IMR-90 (cell line): ENCODE measurements at regions of chr19 and their contacts with region 1.

Region 1: DNA sequence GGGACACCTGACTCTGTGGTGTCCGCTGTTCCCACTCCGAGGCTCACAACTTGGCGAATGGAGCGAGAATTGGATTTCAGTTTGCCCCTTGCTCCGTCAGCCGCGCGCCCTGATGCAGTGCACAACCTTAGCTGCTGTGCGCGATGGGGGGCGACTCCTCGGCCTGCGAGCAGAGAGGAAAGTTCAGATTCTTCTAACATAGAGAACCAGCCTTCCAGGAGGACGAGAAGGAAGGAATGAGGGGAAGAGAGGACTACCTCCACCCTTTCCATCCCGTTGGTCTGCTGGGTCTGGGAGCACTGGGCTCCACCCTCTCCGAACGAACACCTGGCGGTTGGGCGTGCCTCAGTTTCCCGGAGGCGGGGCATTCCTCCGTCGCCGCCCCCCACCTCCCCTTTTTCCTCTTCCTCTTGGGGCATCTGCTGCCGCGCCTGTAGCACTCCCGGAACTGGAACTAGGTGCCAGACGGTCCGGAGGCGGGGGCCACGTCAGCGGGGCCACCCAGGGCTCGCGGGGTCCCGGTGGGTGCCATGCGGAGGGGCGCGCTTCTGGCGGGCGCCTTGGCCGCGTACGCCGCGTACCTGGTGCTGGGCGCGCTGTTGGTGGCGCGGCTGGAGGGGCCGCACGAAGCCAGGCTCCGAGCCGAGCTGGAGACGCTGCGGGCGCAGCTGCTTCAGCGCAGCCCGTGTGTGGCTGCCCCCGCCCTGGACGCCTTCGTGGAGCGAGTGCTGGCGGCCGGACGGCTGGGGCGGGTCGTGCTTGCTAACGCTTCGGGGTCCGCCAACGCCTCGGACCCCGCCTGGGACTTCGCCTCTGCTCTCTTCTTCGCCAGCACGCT is at the start of gene KCNK6:
- DNase-seq: no peak
- ATAC-seq: peak; percentile 19
- H3K4me3 ChIP-seq: peak within 1 kb of the TSS; percentile 56
- H3K27ac ChIP-seq: no peak within 1 kb of the TSS; the same call in 1 of the 2 replicates
- H3K4me1 ChIP-seq: peaks cover 6% of the 10 kb centered on the region
- H3K27me3 ChIP-seq: no peaks in the 10 kb centered on the region; the same call in 1 of the 2 replicates
- CTCF ChIP-seq: no peak
- POLR2A ChIP-seq: peak; percentile 23; the same call in 1 of the 2 replicates
- RAD21 ChIP-seq: no peak
- total RNA-seq, gene KCNK6: 2.7 and 2.8 TPM in 2 replicates

Region 2: DNA sequence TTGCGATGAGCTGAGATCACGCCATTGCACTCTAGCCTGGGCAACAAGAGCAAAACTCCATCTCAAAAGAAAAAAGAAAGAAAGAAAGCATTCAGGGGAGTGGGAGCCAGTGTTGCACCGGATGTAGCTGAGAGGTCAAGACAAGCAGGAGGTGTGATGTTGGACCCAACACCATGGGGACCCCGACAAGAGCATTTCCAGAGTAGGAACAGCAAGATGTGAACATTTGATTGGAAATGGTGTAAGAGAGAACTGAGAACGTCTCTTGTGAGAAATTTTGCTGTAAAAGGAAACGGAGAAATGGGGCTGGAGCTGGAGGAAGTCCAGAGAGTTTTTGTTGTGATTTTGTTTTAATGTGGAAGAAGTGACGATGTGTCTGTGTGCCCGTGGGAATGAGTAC is 79.8 kb before region 1 on chr19:
- CTCF ChIA-PET with region 1: interaction called, 5 read pairs
- POLR2A ChIA-PET with region 1: interaction called, 11 read pairs
- dilution Hi-C with region 1: no loop called
- in situ Hi-C with region 1: no loop called
- intact Hi-C with region 1: no loop called
- DNase-seq: no peak
- ATAC-seq: no peak
- H3K4me3 ChIP-seq: no peak overlapping the region
- H3K27ac ChIP-seq: no peak overlapping the region
- H3K4me1 ChIP-seq: 0 out of 2 replicates have a peak, but pooled peaks cover under 1% of the 10 kb centered on the region
- H3K27me3 ChIP-seq: peaks cover 2% of the 10 kb centered on the region; the same call in 1 of the 2 replicates
- CTCF ChIP-seq: no peak
- POLR2A ChIP-seq: no peak
- RAD21 ChIP-seq: no peak

Region 3: DNA sequence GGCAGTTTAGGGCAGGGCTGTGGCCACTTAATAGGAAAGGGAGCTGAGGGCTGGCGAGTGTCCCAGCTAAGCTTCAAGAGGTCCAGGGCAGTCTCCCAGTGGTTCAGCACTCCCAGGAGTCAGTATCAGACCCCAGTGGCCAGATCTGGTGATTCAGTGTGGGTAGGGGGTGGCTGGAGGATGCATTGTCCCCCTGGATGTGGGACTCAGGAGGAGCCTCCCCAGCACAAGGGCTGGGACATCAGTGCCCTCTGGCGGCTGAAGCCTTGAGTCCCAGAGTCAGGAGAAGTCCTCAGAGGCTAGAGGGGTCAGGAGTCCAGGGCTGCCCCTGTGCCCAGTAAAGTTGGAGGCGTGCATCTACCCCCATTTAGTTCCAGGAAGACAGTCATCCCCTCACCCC is 65.0 kb after region 1 on chr19:
- CTCF ChIA-PET with region 1: no interaction called
- POLR2A ChIA-PET with region 1: no interaction called
- dilution Hi-C with region 1: no loop called
- in situ Hi-C with region 1: no loop called
- intact Hi-C with region 1: no loop called
- DNase-seq: no peak
- ATAC-seq: no peak
- H3K4me3 ChIP-seq: no peak overlapping the region
- H3K27ac ChIP-seq: no peak overlapping the region
- H3K4me1 ChIP-seq: no peaks in the 10 kb centered on the region
- H3K27me3 ChIP-seq: no peaks in the 10 kb centered on the region
- CTCF ChIP-seq: 0 out of 2 replicates have a peak, but pooled peaks have one; percentile 32
- POLR2A ChIP-seq: no peak
- RAD21 ChIP-seq: peak; percentile 38